ENCODE measurements at regions of chr18 and their contacts with region 1.

Region 1: GRCh38 chr18:63339920-63340484 is 20.4 kb upstream of the BCL2 start:
- DNase-seq: peak; percentile 48

Region 2: GRCh38 chr18:63016270-63016669 is 323.7 kb before region 1 on chr18:
- in situ Hi-C with region 1: loop called (anchors 25 kb)
- DNase-seq: peak; percentile 55

Measured in ACHN (cell line).